Cardiac septum (tissue), 1 donor: ENCODE measurements at regions of chr19 and their contacts with region 1.

Region 1: GRCh38 chr19:3665681-3666544 is 34.4 kb downstream of the PIP5K1C start:
- DNase-seq: peak; percentile 90

Region 2: DNA sequence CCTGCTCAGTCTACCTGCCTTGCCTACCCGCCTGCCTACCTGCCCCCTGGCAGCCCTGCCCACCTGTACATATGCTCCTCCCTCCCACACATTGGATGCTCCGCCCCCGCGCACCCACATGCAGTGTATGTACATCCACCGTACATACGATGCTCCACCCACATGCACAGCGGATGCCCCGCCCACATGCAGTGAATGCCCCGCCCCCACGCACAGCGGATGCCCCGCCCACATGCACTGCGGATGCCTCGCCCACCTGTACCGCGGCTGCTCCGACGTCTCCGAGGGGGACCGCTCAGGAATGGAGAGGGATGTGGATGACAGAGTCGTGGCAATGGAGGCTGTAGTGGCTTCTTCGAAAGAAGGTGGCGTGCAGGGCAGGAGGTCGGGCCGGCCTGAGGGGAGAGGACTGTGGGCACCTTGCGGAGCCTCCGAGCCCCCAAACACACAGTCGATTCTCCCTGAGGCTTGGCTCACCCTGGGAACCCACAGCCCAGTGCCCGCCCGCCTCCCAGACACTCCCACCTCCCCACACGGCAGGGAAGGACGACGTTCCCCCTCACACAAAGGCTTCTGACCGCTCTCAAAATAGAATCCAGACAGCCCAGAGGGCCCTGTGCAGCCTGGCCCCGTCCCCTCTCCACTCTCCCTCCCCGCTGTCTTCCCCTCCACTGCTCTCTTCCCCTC is 22.8 kb before region 1 on chr19:
- intact Hi-C with region 1: no loop called
- DNase-seq: no peak

Region 3: GRCh38 chr19:3683405-3684053 is 17.6 kb after region 1 on chr19:
- intact Hi-C with region 1: no loop called
- DNase-seq: peak; percentile 85

Region 4: GRCh38 chr19:3700221-3701032 is 34.5 kb after region 1 on chr19 and contains the start of gene PIP5K1C:
- intact Hi-C with region 1: loop called (anchors 2 kb)
- DNase-seq: peak; percentile 95
- total RNA-seq, gene PIP5K1C: 38.2 TPM

Region 5: GRCh38 chr19:4208385-4209094 is 542.6 kb after region 1 on chr19:
- intact Hi-C with region 1: loop called (anchors 5 kb)
- DNase-seq: no peak